ENCODE measurements at regions of chr11 and their contacts with region 1.

Region 1: GRCh38 chr11:22169833-22170232 is 23.1 kb upstream of the ANO5 start:
- DNase-seq: no peak
- H3K4me3 ChIP-seq: no peak overlapping the region
- H3K27ac ChIP-seq: no peak overlapping the region
- H3K4me1 ChIP-seq: peaks cover 0 to 7% (median 0%) of the 10 kb centered on the region in 4 donors
- H3K27me3 ChIP-seq: no peaks in the 10 kb centered on the region
- CTCF ChIP-seq: peak in 4 of 5 experiments; percentile 22 to 34 (median 31)
- EP300 ChIP-seq: no peak
- POLR2A ChIP-seq: no peak

Region 2: DNA sequence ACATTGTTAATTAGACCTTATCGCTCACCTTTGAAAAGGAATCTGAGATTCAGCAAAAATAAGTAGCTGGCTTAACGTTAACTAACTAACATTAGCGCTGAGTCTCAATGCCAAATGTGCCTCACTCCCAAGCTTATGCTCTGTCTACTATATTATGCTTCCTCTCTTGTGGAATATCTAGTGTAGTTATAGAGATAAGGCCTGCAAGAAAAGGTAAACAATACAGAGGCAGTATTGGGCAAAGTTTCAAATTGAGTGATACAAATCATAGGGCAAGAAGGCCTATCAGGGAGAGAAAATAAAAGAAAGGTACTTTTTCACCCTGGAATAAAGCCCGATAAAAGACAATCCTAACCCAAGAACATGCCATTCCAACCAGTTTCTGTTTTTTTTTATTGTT is 106.7 kb after region 1 on chr11:
- in situ Hi-C with region 1: no loop called
- intact Hi-C with region 1: no loop called
- DNase-seq: no peak
- H3K4me3 ChIP-seq: no peak overlapping the region
- H3K27ac ChIP-seq: no peak overlapping the region
- H3K4me1 ChIP-seq: no peaks in the 10 kb centered on the region
- H3K27me3 ChIP-seq: no peaks in the 10 kb centered on the region
- CTCF ChIP-seq: no peak
- EP300 ChIP-seq: no peak
- POLR2A ChIP-seq: no peak

Region 3: DNA sequence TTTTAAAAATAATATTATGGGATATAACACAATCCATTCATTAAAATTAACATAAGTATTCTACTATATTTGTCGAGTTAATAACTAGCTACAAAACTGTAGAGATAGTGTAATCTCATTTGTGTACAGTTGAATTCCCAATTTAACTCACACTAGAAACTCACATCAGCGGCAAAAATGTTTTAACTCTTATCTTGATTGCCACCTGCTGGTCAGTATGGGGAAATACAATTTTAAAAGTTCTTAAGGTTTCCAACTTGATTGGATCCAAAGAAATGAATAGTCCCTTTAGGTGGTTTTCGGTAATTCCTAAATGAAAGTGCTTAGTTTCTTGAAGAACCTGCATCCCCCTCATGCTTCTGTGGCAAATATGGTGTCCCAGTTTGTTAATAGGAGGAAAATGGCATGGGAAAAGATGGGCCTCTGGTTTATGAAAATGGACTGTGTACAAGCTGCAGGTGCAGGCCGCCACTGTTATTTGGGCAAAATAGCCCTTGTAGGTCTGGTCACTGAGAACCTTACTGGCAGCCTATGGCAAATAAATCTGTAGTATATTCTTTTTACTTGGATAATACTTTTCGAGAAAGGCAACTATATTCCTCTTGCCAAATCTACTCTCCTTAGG is 134.6 kb after region 1 on chr11:
- in situ Hi-C with region 1: loop called in 2 of 4 experiments (anchors 10 kb)
- intact Hi-C with region 1: no loop called
- DNase-seq: no peak
- H3K4me3 ChIP-seq: no peak overlapping the region
- H3K27ac ChIP-seq: no peak overlapping the region
- H3K4me1 ChIP-seq: no peaks in the 10 kb centered on the region
- H3K27me3 ChIP-seq: no peaks in the 10 kb centered on the region
- CTCF ChIP-seq: peak; percentile 60 to 70 (median 65)
- EP300 ChIP-seq: no peak
- POLR2A ChIP-seq: no peak

Measured in transverse colon (tissue), 4 donors.